Esophagus muscularis mucosa (tissue), 4 donors: ENCODE measurements at regions of chr11 and their contacts with region 1.

Region 1: DNA sequence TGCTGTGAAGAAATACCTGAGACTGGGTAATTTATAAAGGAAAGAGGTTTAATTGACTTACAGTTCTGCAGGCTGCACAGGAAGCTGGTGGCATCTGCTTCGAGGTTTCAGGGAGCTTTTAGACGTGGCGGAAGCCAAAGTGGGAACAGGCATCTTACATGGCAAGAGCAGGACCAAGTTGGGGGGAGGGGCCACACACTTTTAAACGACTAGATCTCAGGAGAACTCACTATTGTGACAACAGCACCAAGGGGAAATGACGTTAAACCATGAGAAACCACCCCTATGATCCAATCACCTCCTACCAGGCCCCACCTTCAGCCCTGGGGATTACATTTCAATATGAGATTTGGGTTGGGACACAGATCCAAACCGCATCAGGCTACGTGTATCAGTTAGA is 11.1 kb upstream of the SCGB1D4 start:
- DNase-seq: no peak
- H3K4me3 ChIP-seq: no peak overlapping the region
- H3K27ac ChIP-seq: no peak overlapping the region
- H3K4me1 ChIP-seq: peaks cover 0 to 7% (median 2%) of the 10 kb centered on the region in 4 donors
- H3K27me3 ChIP-seq: peaks cover 0 to 39% (median 2%) of the 10 kb centered on the region in 4 donors
- CTCF ChIP-seq: no peak
- EP300 ChIP-seq: no peak
- POLR2A ChIP-seq: no peak

Region 2: DNA sequence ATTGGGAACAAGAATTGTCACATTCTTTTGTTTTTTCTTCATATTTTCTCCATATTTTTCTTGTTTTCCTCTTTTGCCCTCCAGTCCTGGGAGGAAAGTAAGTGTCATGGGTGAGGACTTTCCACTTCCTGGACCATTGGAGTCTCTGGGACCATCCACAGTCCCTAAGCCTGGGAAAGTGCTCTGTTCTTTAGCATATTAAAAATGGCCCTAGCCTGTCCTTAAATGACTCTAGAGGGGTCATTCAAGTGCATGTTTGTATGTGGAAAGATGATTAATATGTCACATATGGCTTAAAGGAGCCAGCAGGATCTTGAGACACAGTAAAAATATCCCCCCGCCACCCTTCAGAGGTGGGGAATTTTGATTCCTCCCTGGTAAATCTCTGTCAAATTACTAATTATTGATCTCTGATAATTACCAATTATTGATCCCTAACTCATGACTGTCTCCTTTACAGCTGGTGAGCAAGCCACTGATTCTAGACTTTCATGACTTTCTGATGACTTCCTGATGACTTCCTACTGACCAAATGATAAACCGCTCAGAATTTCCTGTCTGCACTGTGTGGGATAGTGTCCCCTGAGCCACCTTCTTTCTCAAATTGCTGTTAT is 139.9 kb before region 1 on chr11:
- intact Hi-C with region 1: loop called (anchors 2 kb)
- DNase-seq: no peak
- H3K4me3 ChIP-seq: no peak overlapping the region
- H3K27ac ChIP-seq: no peak overlapping the region
- H3K4me1 ChIP-seq: peaks cover 0 to 12% (median 6%) of the 10 kb centered on the region in 4 donors
- H3K27me3 ChIP-seq: peaks cover 0 to 41% (median 3%) of the 10 kb centered on the region in 4 donors
- CTCF ChIP-seq: no peak
- EP300 ChIP-seq: no peak
- POLR2A ChIP-seq: no peak

Region 3: GRCh38 chr11:62269650-62270278 is 40.2 kb before region 1 on chr11 and contains the start of gene SCGB2A2:
- intact Hi-C with region 1: no loop called
- DNase-seq: no peak
- H3K4me3 ChIP-seq: no peak within 1 kb of the TSS
- H3K27ac ChIP-seq: no peak within 1 kb of the TSS
- H3K4me1 ChIP-seq: no peaks in the 10 kb centered on the region
- H3K27me3 ChIP-seq: peaks cover 0 to 40% (median 0%) of the 10 kb centered on the region in 4 donors
- CTCF ChIP-seq: no peak
- EP300 ChIP-seq: no peak
- POLR2A ChIP-seq: no peak
- total RNA-seq, gene SCGB2A2: not detected

Region 4: GRCh38 chr11:62573592-62574362 is 263.8 kb after region 1 on chr11 and contains the start of gene EEF1G:
- intact Hi-C with region 1: no loop called
- DNase-seq: peak; percentile 100
- H3K4me3 ChIP-seq: peak within 1 kb of the TSS; percentile 74 to 84 (median 81)
- H3K27ac ChIP-seq: peak within 1 kb of the TSS; percentile 93 to 96 (median 94)
- H3K4me1 ChIP-seq: peaks cover 42 to 70% (median 63%) of the 10 kb centered on the region in 4 donors
- H3K27me3 ChIP-seq: no peaks in the 10 kb centered on the region
- CTCF ChIP-seq: peak in 1 of 3 experiments; percentile 25
- EP300 ChIP-seq: no peak
- POLR2A ChIP-seq: peak; percentile 49
- total RNA-seq, gene EEF1G: 1,068 to 1,537 (median 1,375) TPM